ENCODE measurements at regions of chr11 and their contacts with region 1.

Region 1: DNA sequence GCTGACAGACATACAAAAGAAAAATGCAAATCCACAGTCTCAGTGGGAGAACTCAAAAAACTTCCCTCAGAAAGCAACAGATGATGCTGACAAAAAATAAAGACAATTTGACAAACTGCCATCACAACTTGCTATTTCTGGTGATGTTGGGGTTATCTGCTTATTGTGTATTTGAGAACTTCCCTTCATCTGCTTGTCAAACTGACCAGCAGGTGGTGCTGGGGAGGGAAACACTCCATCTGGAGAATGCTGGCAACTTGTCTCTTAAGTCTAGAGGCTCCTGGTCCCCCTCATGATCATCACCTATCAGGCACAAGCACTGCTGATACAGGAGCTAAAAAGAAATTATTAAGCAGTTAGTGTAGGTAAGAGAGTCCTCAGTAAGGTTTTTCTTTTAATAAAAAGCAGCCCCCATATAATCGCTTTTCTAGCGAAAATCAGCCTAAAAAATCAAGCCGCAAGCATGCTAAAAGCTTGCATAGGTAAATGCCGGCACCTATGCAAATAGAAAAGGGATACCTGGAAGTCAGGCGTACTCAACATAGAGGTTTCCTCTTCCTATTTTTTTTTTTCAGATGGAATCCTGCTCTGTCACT is 9.8 kb upstream of the FAM111B start:
- DNase-seq: peak; percentile 75
- H3K4me3 Mint-ChIP-seq: no peak overlapping the region
- H3K27ac Mint-ChIP-seq: no peak overlapping the region
- H3K4me1 Mint-ChIP-seq: peaks cover 10% of the 10 kb centered on the region
- H3K27me3 Mint-ChIP-seq: no peaks in the 10 kb centered on the region
- CTCF ChIP-seq: peak; percentile 56

Region 2: DNA sequence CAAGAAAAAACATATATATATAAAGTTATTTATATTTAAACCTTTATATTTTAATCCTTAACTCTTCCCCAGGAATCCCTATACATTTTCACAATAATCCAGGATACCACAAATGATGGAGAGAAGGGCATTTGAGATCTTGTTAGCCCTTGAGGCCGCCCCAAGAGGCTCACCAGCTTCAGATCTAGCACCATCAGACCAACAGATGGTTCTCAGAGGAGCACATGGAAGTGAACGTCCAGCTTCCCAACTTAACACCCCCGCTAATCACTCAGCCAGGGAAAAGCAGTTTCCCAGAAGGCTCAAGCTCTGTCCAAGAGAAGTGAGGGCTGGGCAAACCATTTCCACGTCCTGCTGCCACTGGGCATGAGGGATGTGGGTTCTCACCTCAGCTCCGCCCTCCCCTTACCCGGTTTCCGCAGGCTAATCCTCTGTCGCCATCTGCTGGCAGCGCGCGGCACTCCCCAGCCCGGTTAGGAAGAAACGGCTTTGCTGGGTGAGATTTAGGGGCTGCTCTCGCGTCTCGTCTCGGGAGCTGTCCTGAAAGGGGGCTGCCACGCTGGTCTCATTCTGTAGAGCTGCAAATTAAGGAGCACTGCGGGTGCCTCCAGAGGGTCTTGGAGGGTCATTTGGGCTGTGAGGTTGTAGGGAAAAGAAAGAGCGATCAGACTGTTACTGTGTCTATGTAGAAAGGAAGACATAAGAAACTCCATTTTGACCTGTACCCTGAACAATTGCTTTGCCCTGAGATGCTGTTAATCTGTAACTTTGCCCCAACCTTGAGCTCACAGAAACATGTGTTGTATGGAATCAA is 38.6 kb after region 1 on chr11:
- CTCF ChIA-PET with region 1: no interaction called
- intact Hi-C with region 1: loop called (anchors 2 kb)
- DNase-seq: peak; percentile 78
- H3K4me3 Mint-ChIP-seq: no peak overlapping the region
- H3K27ac Mint-ChIP-seq: no peak overlapping the region
- H3K4me1 Mint-ChIP-seq: peaks cover 12% of the 10 kb centered on the region
- H3K27me3 Mint-ChIP-seq: no peaks in the 10 kb centered on the region
- CTCF ChIP-seq: peak; percentile 75

Region 3: DNA sequence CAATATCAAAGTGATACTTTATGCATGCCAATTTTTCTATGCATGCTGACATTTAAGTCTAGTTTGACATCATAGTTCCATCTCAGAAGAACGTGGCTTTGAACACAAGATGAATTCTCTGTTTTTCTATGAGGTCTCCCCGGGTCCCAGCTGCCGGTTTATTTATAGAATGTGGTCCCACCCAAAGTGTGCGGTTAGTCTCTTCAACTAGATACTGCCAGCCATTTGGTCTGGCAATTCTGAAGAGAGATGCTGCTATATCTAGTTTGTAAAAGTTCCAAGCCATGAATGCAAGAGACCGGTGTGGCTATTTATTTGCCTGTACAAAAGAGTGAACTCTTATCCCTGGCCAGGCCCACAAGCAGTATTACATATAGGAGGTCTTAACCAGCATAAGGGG is 319.8 kb after region 1 on chr11:
- CTCF ChIA-PET with region 1: no interaction called
- intact Hi-C with region 1: no loop called
- DNase-seq: no peak
- H3K4me3 Mint-ChIP-seq: no peak overlapping the region
- H3K27ac Mint-ChIP-seq: no peak overlapping the region
- H3K4me1 Mint-ChIP-seq: no peaks in the 10 kb centered on the region
- H3K27me3 Mint-ChIP-seq: peaks cover 24% of the 10 kb centered on the region
- CTCF ChIP-seq: no peak

Measured in Calu3 (cell line).